ENCODE measurements at regions of chr9 and their contacts with region 1.

Region 1: DNA sequence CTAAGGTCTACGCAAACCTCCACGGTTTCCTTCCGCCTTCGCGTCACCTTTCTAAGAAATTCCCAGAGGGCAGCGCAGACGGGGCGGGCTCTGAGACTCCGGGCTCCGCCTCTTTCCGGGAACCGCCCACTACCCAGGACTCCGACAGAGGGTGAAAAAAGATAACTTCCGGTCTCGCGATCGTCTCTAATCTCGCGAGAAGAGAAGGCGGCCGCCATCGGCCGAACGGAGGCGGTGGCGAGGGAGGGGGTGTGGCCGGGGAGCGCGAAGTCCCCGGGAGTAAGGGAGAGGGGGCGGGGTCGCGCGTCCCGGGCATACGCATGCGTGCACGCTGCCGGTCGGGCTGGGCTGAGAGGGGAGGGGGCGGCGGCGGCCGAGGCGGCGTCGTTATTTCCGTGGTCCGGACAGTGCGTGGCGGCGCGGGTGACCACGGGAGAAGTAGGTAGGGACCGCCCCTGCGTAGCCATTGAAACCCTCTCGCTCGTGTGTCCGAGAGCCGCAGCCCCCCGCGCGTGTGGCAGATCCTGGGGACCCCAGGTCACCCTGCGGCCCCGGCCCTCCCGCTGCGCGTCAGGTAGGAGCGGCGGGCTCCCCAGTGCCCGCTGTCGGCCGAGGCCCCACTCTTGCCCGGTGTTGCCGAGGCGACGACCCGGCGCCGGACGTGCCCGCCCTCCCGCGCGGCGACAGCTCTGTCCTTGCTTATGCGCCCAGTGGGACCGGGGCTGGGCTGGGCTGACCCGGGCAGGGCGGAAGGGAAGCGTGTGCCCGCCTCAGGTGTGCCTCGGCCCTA is at the start of gene NAA35:
- DNase-seq: peak; percentile 91 to 99
- H3K4me3 ChIP-seq: peak within 1 kb of the TSS; percentile 74 to 84
- H3K27ac ChIP-seq: peak within 1 kb of the TSS; percentile 89 to 96
- H3K4me1 ChIP-seq: peaks cover 0 to 18% of the 10 kb centered on the region in 2 donors
- H3K27me3 ChIP-seq: no peaks in the 10 kb centered on the region
- CTCF ChIP-seq: no peak
- total RNA-seq, gene NAA35: 3.3 TPM

Region 2: DNA sequence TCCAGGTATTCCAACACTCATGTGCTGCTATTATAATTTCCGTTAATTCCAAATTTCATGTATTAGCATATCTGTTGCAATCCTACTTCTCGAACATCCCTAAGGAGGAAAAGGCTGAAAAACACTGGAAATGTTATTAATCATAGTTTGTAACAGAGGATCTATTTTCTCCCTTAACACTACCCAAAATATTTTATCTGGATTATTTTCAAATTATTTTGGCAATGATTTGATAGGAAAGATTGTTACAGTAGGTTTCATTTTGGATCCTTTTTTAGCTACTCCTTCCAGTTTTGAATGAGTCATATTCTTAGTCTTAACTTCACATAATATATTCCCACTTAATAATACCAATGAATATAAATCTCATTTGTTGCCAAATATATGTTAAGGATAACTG is 14.0 kb before region 1 on chr9:
- intact Hi-C with region 1: loop called (anchors 1 kb)
- DNase-seq: no peak
- H3K4me3 ChIP-seq: no peak overlapping the region
- H3K27ac ChIP-seq: peak overlapping the region; percentile 12 to 19
- H3K4me1 ChIP-seq: peaks cover 0 to 9% of the 10 kb centered on the region in 2 donors
- H3K27me3 ChIP-seq: no peaks in the 10 kb centered on the region
- CTCF ChIP-seq: no peak

Region 3: GRCh38 chr9:86354011-86354817 is 413.2 kb after region 1 on chr9 and contains the start of gene TUT7:
- intact Hi-C with region 1: loop called (anchors 5 kb)
- DNase-seq: peak; percentile 81 to 97
- H3K4me3 ChIP-seq: peak within 1 kb of the TSS; percentile 93 to 99
- H3K27ac ChIP-seq: peak within 1 kb of the TSS; percentile 97 to 100
- H3K4me1 ChIP-seq: peaks cover 3 to 16% of the 10 kb centered on the region in 2 donors
- H3K27me3 ChIP-seq: no peaks in the 10 kb centered on the region
- CTCF ChIP-seq: no peak
- total RNA-seq, gene TUT7: 12.9 TPM

Region 4: GRCh38 chr9:86968258-86968920 is 1027.4 kb after region 1 on chr9:
- intact Hi-C with region 1: no loop called
- DNase-seq: no peak
- H3K4me3 ChIP-seq: no peak overlapping the region
- H3K27ac ChIP-seq: peak overlapping the region in 1 of 2 donors; percentile 19
- H3K4me1 ChIP-seq: peaks cover 6 to 13% of the 10 kb centered on the region in 2 donors
- H3K27me3 ChIP-seq: no peaks in the 10 kb centered on the region
- CTCF ChIP-seq: no peak